Activated naive CD4-positive, alpha-beta T cell treated with anti-CD3 and anti-CD28 coated beads for 36 hours (primary cell): ENCODE measurements at regions of chr6 and their contacts with region 1.

Region 1: GRCh38 chr6:111483736-111484632 is 966 bp upstream of the REV3L start:
- DNase-seq: peak; percentile 92
- H3K4me3 Mint-ChIP-seq: peak overlapping the region; percentile 97
- H3K27ac Mint-ChIP-seq: peak overlapping the region; percentile 99
- H3K4me1 Mint-ChIP-seq: peaks cover 47% of the 10 kb centered on the region
- H3K27me3 Mint-ChIP-seq: no peaks in the 10 kb centered on the region

Region 2: DNA sequence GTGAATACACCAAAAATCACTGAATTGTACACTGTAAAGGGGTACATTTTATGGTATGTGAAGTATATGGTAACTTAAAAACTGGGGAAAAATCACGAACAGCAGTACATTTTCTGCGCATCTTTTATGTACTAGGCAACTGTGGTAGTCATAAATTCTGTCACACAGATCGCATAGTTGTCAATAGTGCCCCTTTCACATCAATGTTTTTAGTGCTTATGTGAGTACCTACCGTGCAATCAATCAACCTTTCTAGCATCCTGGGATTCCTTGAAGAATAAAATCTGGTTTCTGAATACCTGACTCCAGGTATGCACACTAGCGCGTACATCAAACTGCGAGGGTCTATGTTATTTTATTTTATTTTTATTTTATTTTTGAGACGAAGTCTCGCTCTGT is 502.8 kb before region 1 on chr6:
- CTCF ChIA-PET with region 1: no interaction called
- intact Hi-C with region 1: loop called (anchors 1 kb)
- DNase-seq: no peak
- H3K4me3 Mint-ChIP-seq: peak overlapping the region; percentile 96
- H3K27ac Mint-ChIP-seq: peak overlapping the region; percentile 96
- H3K4me1 Mint-ChIP-seq: peaks cover 38% of the 10 kb centered on the region
- H3K27me3 Mint-ChIP-seq: no peaks in the 10 kb centered on the region

Region 3: GRCh38 chr6:111517965-111518364 is 34.0 kb after region 1 on chr6:
- CTCF ChIA-PET with region 1: no interaction called
- intact Hi-C with region 1: no loop called
- DNase-seq: no peak
- H3K4me3 Mint-ChIP-seq: no peak overlapping the region
- H3K27ac Mint-ChIP-seq: no peak overlapping the region
- H3K4me1 Mint-ChIP-seq: peaks cover 9% of the 10 kb centered on the region
- H3K27me3 Mint-ChIP-seq: no peaks in the 10 kb centered on the region

Region 4: GRCh38 chr6:111534231-111534751 is 50.3 kb after region 1 on chr6:
- CTCF ChIA-PET with region 1: interaction called, 3 read pairs
- intact Hi-C with region 1: loop called (anchors 1 kb)
- DNase-seq: no peak
- H3K4me3 Mint-ChIP-seq: no peak overlapping the region
- H3K27ac Mint-ChIP-seq: no peak overlapping the region
- H3K4me1 Mint-ChIP-seq: peaks cover 30% of the 10 kb centered on the region
- H3K27me3 Mint-ChIP-seq: no peaks in the 10 kb centered on the region

Region 5: GRCh38 chr6:111642463-111643158 is 158.6 kb after region 1 on chr6:
- CTCF ChIA-PET with region 1: no interaction called
- intact Hi-C with region 1: loop called (anchors 2 kb)
- DNase-seq: peak; percentile 73
- H3K4me3 Mint-ChIP-seq: no peak overlapping the region
- H3K27ac Mint-ChIP-seq: no peak overlapping the region
- H3K4me1 Mint-ChIP-seq: no peaks in the 10 kb centered on the region
- H3K27me3 Mint-ChIP-seq: no peaks in the 10 kb centered on the region

Region 6: DNA sequence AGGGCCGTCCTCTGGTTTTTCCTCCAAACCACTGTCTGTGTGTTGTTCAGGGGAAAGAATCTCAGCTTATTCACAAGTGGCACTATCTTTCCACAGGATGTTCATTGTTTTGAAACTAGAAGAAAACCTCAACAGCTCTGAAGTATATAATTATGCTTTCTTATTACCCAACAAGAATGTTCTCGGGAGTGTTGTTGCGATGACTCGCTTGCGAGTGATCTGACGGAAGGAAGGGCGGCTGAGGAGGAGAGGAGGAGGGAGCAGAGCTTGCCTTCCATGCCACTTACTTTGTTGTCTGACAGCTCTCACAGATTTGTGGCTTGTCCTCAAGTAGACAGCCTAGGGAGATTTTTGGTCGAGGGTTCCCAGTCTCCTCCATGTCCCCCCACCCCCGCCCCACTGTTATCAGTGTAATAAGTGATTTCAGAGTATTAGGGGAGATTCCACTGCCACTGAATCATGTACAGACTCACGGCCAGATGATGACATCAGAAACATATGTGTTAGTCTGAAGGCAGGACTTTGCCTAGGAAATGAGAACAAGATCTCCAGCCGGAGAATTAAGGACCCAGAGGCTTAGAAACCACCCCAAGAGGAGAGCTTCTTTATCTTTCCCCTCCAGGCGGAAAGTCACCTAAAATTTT is 489.3 kb after region 1 on chr6:
- CTCF ChIA-PET with region 1: no interaction called
- intact Hi-C with region 1: loop called (anchors 1 kb)
- DNase-seq: peak; percentile 84
- H3K4me3 Mint-ChIP-seq: peak overlapping the region; percentile 70
- H3K27ac Mint-ChIP-seq: peak overlapping the region; percentile 96
- H3K4me1 Mint-ChIP-seq: peaks cover 70% of the 10 kb centered on the region
- H3K27me3 Mint-ChIP-seq: no peaks in the 10 kb centered on the region